ENCODE measurements at regions of chr2 and their contacts with region 1.

Region 1: GRCh38 chr2:6896930-6897759 is 19.6 kb downstream of the RSAD2 start:
- DNase-seq: no peak
- ATAC-seq: peak; percentile 64
- H3K4me3 Mint-ChIP-seq: no peak overlapping the region
- H3K27ac Mint-ChIP-seq: peak overlapping the region; percentile 78
- H3K4me1 Mint-ChIP-seq: peaks cover 33% of the 10 kb centered on the region
- H3K27me3 Mint-ChIP-seq: no peaks in the 10 kb centered on the region

Region 2: GRCh38 chr2:6723865-6724604 is 173.1 kb before region 1 on chr2:
- CTCF ChIA-PET with region 1: no interaction called
- POLR2A ChIA-PET with region 1: no interaction called
- DNase-seq: no peak
- ATAC-seq: no peak
- H3K4me3 Mint-ChIP-seq: no peak overlapping the region
- H3K27ac Mint-ChIP-seq: no peak overlapping the region
- H3K4me1 Mint-ChIP-seq: no peaks in the 10 kb centered on the region
- H3K27me3 Mint-ChIP-seq: no peaks in the 10 kb centered on the region

Region 3: DNA sequence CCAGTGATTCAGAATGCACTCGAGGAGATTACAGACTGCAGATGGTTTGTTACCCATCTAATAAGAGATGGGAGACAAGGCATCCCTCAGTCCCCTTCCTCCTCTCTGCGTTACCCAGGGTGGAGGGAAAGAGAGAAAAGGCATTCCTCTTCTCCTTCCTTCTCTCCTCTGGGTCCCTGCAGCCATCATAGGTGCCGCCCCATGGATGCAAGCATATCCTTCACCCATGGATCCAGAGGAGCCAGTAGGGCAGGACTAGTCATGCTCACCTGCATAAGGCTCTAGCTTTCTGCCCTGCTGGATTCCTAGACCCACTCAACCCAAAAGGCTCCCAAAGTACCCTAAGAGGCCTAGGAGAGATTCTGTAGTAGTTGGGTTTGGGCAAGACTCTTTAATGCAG is 51.8 kb before region 1 on chr2:
- CTCF ChIA-PET with region 1: interaction called, 16 read pairs
- POLR2A ChIA-PET with region 1: no interaction called
- DNase-seq: no peak
- ATAC-seq: peak; percentile 19
- H3K4me3 Mint-ChIP-seq: no peak overlapping the region
- H3K27ac Mint-ChIP-seq: no peak overlapping the region
- H3K4me1 Mint-ChIP-seq: peaks cover 34% of the 10 kb centered on the region
- H3K27me3 Mint-ChIP-seq: no peaks in the 10 kb centered on the region

Region 4: GRCh38 chr2:6865346-6866274 is 31.5 kb before region 1 on chr2 and contains the start of gene CMPK2:
- CTCF ChIA-PET with region 1: interaction called, 11 read pairs
- POLR2A ChIA-PET with region 1: interaction called, 15 read pairs
- DNase-seq: peak; percentile 94
- ATAC-seq: peak; percentile 84
- H3K4me3 Mint-ChIP-seq: peak within 1 kb of the TSS; percentile 91
- H3K27ac Mint-ChIP-seq: peak within 1 kb of the TSS; percentile 98
- H3K4me1 Mint-ChIP-seq: peaks cover 68% of the 10 kb centered on the region
- H3K27me3 Mint-ChIP-seq: no peaks in the 10 kb centered on the region
- total RNA-seq, gene CMPK2: 84.0 to 90.8 TPM

Region 5: DNA sequence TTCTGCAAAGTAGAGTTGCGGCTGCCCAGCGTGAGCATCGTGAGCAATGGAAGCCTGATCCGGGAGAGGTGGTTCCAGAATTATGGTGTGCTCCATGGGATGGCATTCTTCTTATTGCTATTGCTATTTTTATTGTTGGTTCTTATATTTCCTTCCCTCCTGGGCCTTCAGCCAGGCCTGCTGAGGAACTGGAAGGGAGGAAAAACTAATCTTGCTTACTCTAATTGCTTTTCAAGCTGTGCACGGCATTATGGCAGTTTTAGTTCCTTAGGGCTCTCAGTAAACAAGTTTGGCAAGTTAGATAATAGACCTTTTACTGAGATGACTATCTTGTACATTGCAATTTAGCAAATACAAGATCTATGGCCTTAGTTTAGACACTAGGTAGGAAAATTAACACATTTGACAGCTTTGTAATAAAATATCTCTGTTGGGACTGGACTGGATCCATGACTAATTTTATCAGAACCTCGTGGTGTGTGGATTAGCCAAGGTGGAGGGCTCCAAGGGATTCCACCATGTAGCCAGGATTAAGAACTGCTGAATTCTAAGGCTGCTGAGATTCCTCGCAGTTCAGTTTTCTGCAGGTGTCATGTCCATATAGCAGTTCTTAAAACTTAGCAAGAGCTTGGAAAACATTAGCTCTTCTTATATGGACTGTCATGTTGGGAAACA is 13.6 kb before region 1 on chr2:
- CTCF ChIA-PET with region 1: interaction called, 56 read pairs
- POLR2A ChIA-PET with region 1: interaction called, 3 read pairs
- DNase-seq: no peak
- ATAC-seq: no peak
- H3K4me3 Mint-ChIP-seq: no peak overlapping the region
- H3K27ac Mint-ChIP-seq: no peak overlapping the region
- H3K4me1 Mint-ChIP-seq: peaks cover 49% of the 10 kb centered on the region
- H3K27me3 Mint-ChIP-seq: no peaks in the 10 kb centered on the region

Region 6: GRCh38 chr2:6917071-6917760 is 20.1 kb after region 1 on chr2 and contains the start of gene RNF144A:
- CTCF ChIA-PET with region 1: interaction called, 135 read pairs
- POLR2A ChIA-PET with region 1: interaction called, 33 read pairs
- DNase-seq: peak; percentile 72
- ATAC-seq: peak; percentile 80
- H3K4me3 Mint-ChIP-seq: peak within 1 kb of the TSS; percentile 85
- H3K27ac Mint-ChIP-seq: peak within 1 kb of the TSS; percentile 86
- H3K4me1 Mint-ChIP-seq: peaks cover 77% of the 10 kb centered on the region
- H3K27me3 Mint-ChIP-seq: no peaks in the 10 kb centered on the region
- total RNA-seq, gene RNF144A: 76.9 to 87.0 TPM

Region 7: GRCh38 chr2:7044261-7045250 is 147.4 kb after region 1 on chr2:
- CTCF ChIA-PET with region 1: interaction called, 59 read pairs
- POLR2A ChIA-PET with region 1: interaction called, 4 read pairs
- DNase-seq: peak; percentile 69
- ATAC-seq: peak; percentile 60
- H3K4me3 Mint-ChIP-seq: no peak overlapping the region
- H3K27ac Mint-ChIP-seq: no peak overlapping the region
- H3K4me1 Mint-ChIP-seq: peaks cover 10% of the 10 kb centered on the region
- H3K27me3 Mint-ChIP-seq: no peaks in the 10 kb centered on the region

Region 8: GRCh38 chr2:7333189-7333765 is 436.1 kb after region 1 on chr2:
- CTCF ChIA-PET with region 1: no interaction called
- POLR2A ChIA-PET with region 1: no interaction called
- DNase-seq: no peak
- ATAC-seq: no peak
- H3K4me3 Mint-ChIP-seq: no peak overlapping the region
- H3K27ac Mint-ChIP-seq: no peak overlapping the region
- H3K4me1 Mint-ChIP-seq: no peaks in the 10 kb centered on the region
- H3K27me3 Mint-ChIP-seq: peaks cover 18% of the 10 kb centered on the region

Measured in activated CD8-positive, alpha-beta T cell treated with anti-CD3 and anti-CD28 coated beads, Interleukin-2, amount 10 ng/mL, durations not matched to agents 7 days and 5 days (primary cell).